ENCODE measurements at regions of chr19 and their contacts with region 1.

Region 1: DNA sequence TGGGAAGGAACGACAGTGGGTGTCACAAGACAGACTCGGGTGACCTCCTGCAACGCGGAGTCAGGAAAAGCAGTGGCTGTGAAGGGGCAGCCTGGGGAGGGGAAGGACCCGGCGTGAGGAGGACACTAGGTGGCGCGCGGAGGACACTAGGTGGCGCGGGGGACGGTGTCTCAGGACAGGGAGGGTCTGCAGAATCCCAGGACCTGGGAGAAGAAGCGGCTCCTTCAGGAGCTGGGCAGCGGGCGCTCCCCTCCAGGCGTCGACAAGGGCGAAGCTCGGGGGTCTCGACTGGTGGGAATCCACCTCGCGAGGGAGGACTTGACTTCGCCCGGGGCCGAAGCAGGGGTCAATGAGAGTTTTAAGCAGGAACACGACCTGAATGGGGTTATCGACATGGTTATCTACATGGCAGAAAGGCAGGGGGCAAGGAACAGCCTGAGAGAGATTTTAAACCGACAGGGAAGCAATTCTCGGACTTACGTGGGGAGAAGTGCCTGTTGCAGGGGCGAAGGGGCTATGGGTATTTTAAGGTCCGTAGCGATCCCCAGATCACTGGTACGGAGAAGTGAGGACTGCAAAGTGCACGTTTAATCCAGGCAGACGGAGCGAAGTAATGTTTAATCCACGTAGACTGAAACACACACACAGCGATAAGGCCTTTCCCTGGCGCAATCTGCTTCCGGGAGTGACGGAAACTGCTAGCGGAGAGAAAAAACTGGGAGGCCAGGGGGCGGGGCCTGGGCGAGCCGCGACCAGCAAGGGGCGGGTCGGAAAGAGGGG is at the start of gene ZNF616:
- DNase-seq: peak; percentile 58 to 97 (median 95)
- ATAC-seq: peak; percentile 74
- H3K4me3 ChIP-seq: peak within 1 kb of the TSS; percentile 99
- H3K4me3 Mint-ChIP-seq: peak within 1 kb of the TSS; percentile 92 to 99 (median 96)
- H3K27ac ChIP-seq: peak within 1 kb of the TSS; percentile 89
- H3K27ac Mint-ChIP-seq: peak within 1 kb of the TSS; percentile 88 to 98 (median 96)
- H3K4me1 ChIP-seq: peaks cover 15 to 18% of the 10 kb centered on the region in 2 donors
- H3K4me1 Mint-ChIP-seq: peaks cover 20 to 44% (median 33%) of the 10 kb centered on the region in 7 donors
- H3K27me3 ChIP-seq: no peaks in the 10 kb centered on the region
- H3K27me3 Mint-ChIP-seq: no peaks in the 10 kb centered on the region
- total RNA-seq, gene ZNF616: 2.8 to 18.5 (median 6.1) TPM

Region 2: DNA sequence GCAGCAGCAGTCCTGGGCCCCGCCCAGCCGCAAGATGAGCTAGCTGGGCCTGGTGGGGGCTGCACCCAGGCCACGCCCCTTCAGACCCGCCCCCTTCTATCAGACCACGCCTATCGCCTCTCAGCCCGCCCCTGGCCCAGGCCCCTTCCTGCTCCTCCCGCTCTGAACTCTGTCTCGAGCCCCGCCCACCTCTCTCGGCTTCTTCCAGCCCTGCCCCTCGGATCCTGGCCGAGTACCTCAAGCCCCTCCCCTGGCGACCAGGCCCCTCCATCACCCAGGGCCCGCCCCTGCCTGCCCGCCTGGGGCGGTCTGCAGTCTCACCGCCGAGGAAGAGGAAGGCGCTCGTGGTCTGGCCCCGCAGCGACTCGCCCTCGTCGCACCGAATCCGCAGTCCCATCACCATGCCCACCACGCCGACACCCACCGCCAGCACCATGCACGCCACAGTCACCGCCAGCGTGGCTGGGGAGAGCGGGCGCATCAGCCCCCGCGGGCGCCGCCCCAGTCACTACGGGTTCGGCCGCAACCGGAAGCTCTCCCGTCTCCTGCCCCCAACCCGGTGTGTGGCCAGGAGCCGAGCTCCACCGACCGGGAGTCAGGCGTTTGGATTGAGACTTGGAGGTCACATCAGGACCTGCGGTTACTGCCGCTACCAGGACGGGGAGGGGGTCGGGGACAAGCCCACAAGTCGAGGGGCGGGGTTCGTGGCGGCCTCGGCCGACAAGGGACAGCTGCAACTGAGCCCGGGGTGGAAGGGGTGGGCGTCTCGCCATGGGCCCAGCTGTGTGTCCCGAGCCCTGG is 771.7 kb before region 1 on chr19:
- CTCF ChIA-PET with region 1: no interaction called
- POLR2A ChIA-PET with region 1: no interaction called
- intact Hi-C with region 1: no loop called
- DNase-seq: peak; percentile 84 to 100 (median 90)
- ATAC-seq: peak; percentile 93
- H3K4me3 ChIP-seq: peak overlapping the region; percentile 96
- H3K4me3 Mint-ChIP-seq: peak overlapping the region; percentile 92 to 100 (median 98)
- H3K27ac ChIP-seq: peak overlapping the region; percentile 81
- H3K27ac Mint-ChIP-seq: peak overlapping the region; percentile 79 to 98 (median 95)
- H3K4me1 ChIP-seq: peaks cover 23 to 26% of the 10 kb centered on the region in 2 donors
- H3K4me1 Mint-ChIP-seq: peaks cover 53 to 81% (median 59%) of the 10 kb centered on the region in 7 donors
- H3K27me3 ChIP-seq: no peaks in the 10 kb centered on the region
- H3K27me3 Mint-ChIP-seq: no peaks in the 10 kb centered on the region

Region 3: GRCh38 chr19:51986309-51987291 is 152.8 kb before region 1 on chr19 and contains the start of gene ZNF350:
- CTCF ChIA-PET with region 1: no interaction called
- POLR2A ChIA-PET with region 1: no interaction called
- intact Hi-C with region 1: loop called in 1 of 2 experiments (anchors 1 kb)
- DNase-seq: peak; percentile 61 to 94 (median 89)
- ATAC-seq: peak; percentile 100
- H3K4me3 ChIP-seq: peak within 1 kb of the TSS; percentile 89
- H3K4me3 Mint-ChIP-seq: peak within 1 kb of the TSS; percentile 93 to 99 (median 96)
- H3K27ac ChIP-seq: peak within 1 kb of the TSS; percentile 82
- H3K27ac Mint-ChIP-seq: peak within 1 kb of the TSS; percentile 91 to 98 (median 94)
- H3K4me1 ChIP-seq: peaks cover 6 to 10% of the 10 kb centered on the region in 2 donors
- H3K4me1 Mint-ChIP-seq: peaks cover 10 to 33% (median 20%) of the 10 kb centered on the region in 7 donors
- H3K27me3 ChIP-seq: no peaks in the 10 kb centered on the region
- H3K27me3 Mint-ChIP-seq: no peaks in the 10 kb centered on the region
- total RNA-seq, gene ZNF350: 18.1 to 43.7 (median 36.0) TPM

Region 4: GRCh38 chr19:52095172-52096014 is 44.0 kb before region 1 on chr19 and contains the start of gene ZNF841:
- CTCF ChIA-PET with region 1: no interaction called
- POLR2A ChIA-PET with region 1: no interaction called
- intact Hi-C with region 1: loop called (anchors 1 kb)
- DNase-seq: peak; percentile 64 to 84 (median 75)
- ATAC-seq: peak; percentile 98
- H3K4me3 ChIP-seq: peak within 1 kb of the TSS; percentile 86
- H3K4me3 Mint-ChIP-seq: peak within 1 kb of the TSS; percentile 87 to 99 (median 96)
- H3K27ac ChIP-seq: peak within 1 kb of the TSS; percentile 81
- H3K27ac Mint-ChIP-seq: peak within 1 kb of the TSS; percentile 62 to 99 (median 94)
- H3K4me1 ChIP-seq: peaks cover 0 to 9% of the 10 kb centered on the region in 2 donors
- H3K4me1 Mint-ChIP-seq: peaks cover 24 to 47% (median 39%) of the 10 kb centered on the region in 7 donors
- H3K27me3 ChIP-seq: no peaks in the 10 kb centered on the region
- H3K27me3 Mint-ChIP-seq: no peaks in the 10 kb centered on the region
- total RNA-seq, gene ZNF841: 22.6 to 43.5 (median 27.5) TPM

Region 5: DNA sequence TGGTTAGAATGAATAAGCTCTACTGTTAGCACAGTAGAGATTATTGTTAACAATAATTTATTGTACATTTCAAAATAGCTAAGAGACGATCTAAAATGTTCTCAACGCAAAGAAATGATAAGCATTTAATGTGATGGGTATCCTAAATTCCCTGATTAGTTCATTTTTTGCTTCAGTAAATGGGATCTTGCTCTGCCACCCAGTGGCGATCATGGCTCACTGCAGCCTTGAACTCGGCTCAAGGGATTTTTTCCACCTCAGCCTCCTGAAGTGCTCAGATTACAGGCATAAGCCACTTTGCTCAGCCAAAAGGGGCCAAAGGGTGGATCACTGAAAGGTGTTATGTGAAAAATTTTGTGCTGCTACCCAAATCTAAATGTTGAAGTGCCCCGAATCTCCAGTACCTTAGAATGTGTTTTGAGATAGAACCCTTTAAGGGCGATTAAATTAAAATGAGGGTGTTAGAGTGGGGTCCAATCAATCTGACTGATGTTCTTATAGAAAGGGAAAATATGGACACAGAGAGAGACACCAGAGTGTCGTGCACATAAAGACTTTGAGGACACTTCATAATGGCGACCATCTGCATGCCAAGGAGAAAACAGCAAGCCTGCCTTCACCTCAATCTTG is 98.4 kb after region 1 on chr19:
- CTCF ChIA-PET with region 1: interaction called, 31 read pairs
- POLR2A ChIA-PET with region 1: interaction called, 7 read pairs
- intact Hi-C with region 1: loop called (anchors 1 kb)
- DNase-seq: peak in 8 of 9 donors; percentile 26 to 60 (median 50)
- ATAC-seq: peak; percentile 88
- H3K4me3 ChIP-seq: no peak overlapping the region
- H3K4me3 Mint-ChIP-seq: no peak overlapping the region
- H3K27ac ChIP-seq: no peak overlapping the region
- H3K27ac Mint-ChIP-seq: peak overlapping the region in 1 of 9 donors; percentile 26
- H3K4me1 ChIP-seq: no peaks in the 10 kb centered on the region
- H3K4me1 Mint-ChIP-seq: peaks cover 0 to 6% (median 0%) of the 10 kb centered on the region in 7 donors
- H3K27me3 ChIP-seq: no peaks in the 10 kb centered on the region
- H3K27me3 Mint-ChIP-seq: peaks cover 0 to 2% (median 0%) of the 10 kb centered on the region in 5 donors

Region 6: GRCh38 chr19:52527134-52527955 is 387.9 kb after region 1 on chr19 and contains the start of gene ZNF808:
- CTCF ChIA-PET with region 1: no interaction called
- POLR2A ChIA-PET with region 1: no interaction called
- intact Hi-C with region 1: loop called in 1 of 2 experiments (anchors 5 kb)
- DNase-seq: peak; percentile 79 to 95 (median 90)
- ATAC-seq: peak; percentile 99
- H3K4me3 ChIP-seq: peak within 1 kb of the TSS; percentile 99
- H3K4me3 Mint-ChIP-seq: peak within 1 kb of the TSS; percentile 91 to 100 (median 98)
- H3K27ac ChIP-seq: peak within 1 kb of the TSS; percentile 91
- H3K27ac Mint-ChIP-seq: peak within 1 kb of the TSS; percentile 84 to 99 (median 98)
- H3K4me1 ChIP-seq: peaks cover 9 to 12% of the 10 kb centered on the region in 2 donors
- H3K4me1 Mint-ChIP-seq: peaks cover 18 to 34% (median 25%) of the 10 kb centered on the region in 7 donors
- H3K27me3 ChIP-seq: no peaks in the 10 kb centered on the region
- H3K27me3 Mint-ChIP-seq: no peaks in the 10 kb centered on the region
- total RNA-seq, gene ZNF808: 17.7 to 52.4 (median 33.7) TPM

Region 7: GRCh38 chr19:52637718-52638585 is 498.5 kb after region 1 on chr19 and contains the start of gene ZNF83:
- CTCF ChIA-PET with region 1: no interaction called
- POLR2A ChIA-PET with region 1: no interaction called
- intact Hi-C with region 1: loop called in 1 of 2 experiments (anchors 5 kb)
- DNase-seq: peak; percentile 81 to 97 (median 92)
- ATAC-seq: peak; percentile 99
- H3K4me3 ChIP-seq: peak within 1 kb of the TSS; percentile 86
- H3K4me3 Mint-ChIP-seq: peak within 1 kb of the TSS; percentile 92 to 98 (median 95)
- H3K27ac ChIP-seq: peak within 1 kb of the TSS; percentile 99
- H3K27ac Mint-ChIP-seq: peak within 1 kb of the TSS; percentile 94 to 98 (median 97)
- H3K4me1 ChIP-seq: peaks cover 7 to 8% of the 10 kb centered on the region in 2 donors
- H3K4me1 Mint-ChIP-seq: peaks cover 11 to 27% (median 20%) of the 10 kb centered on the region in 7 donors
- H3K27me3 ChIP-seq: no peaks in the 10 kb centered on the region
- H3K27me3 Mint-ChIP-seq: no peaks in the 10 kb centered on the region
- total RNA-seq, gene ZNF83: 49.7 to 113 (median 70.5) TPM

Region 8: GRCh38 chr19:53394974-53395839 is 1255.8 kb after region 1 on chr19 and contains the start of gene ZNF765:
- CTCF ChIA-PET with region 1: no interaction called
- POLR2A ChIA-PET with region 1: no interaction called
- intact Hi-C with region 1: loop called in 1 of 2 experiments (anchors 1 kb)
- DNase-seq: peak; percentile 92 to 99 (median 97)
- ATAC-seq: peak; percentile 100
- H3K4me3 ChIP-seq: peak within 1 kb of the TSS; percentile 97
- H3K4me3 Mint-ChIP-seq: peak within 1 kb of the TSS; percentile 88 to 97 (median 93)
- H3K27ac ChIP-seq: peak within 1 kb of the TSS; percentile 82
- H3K27ac Mint-ChIP-seq: peak within 1 kb of the TSS; percentile 89 to 97 (median 94)
- H3K4me1 ChIP-seq: peaks cover 5 to 8% of the 10 kb centered on the region in 2 donors
- H3K4me1 Mint-ChIP-seq: peaks cover 13 to 40% (median 31%) of the 10 kb centered on the region in 7 donors
- H3K27me3 ChIP-seq: no peaks in the 10 kb centered on the region
- H3K27me3 Mint-ChIP-seq: no peaks in the 10 kb centered on the region
- total RNA-seq, gene ZNF765: 5.1 to 19.5 (median 11.4) TPM

Measured in naive thymus-derived CD4-positive, alpha-beta T cell (primary cell).